ENCODE measurements at regions of chr6 and their contacts with region 1.

Region 1: GRCh38 chr6:137094411-137095008 is 49.7 kb upstream of the IL20RA start:
- DNase-seq: peak in 37 of 42 donors; percentile 25 to 82 (median 62)

Region 2: DNA sequence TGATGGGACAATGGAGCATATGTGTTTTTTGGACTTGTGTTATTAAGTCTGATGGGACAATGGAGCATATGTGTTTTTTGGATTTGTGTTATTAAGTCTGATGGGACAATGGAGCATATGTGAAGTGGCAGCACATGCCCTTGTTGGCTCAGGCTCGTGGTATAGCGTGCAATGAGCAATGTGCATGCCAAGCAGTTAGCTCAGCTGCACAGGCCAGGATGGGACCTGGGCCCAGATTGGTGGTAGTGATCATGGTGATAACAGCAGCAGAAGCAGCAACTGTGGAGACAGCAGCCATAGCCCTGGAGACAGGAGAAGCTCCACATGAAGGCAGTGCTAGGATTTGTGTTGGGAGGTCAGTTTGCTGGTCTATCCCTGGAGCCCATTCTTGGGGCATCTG is 110.8 kb before region 1 on chr6:
- intact Hi-C with region 1: no loop called
- DNase-seq: no peak

Region 3: GRCh38 chr6:137001299-137001976 is 93.1 kb before region 1 on chr6:
- intact Hi-C with region 1: no loop called
- DNase-seq: no peak

Region 4: DNA sequence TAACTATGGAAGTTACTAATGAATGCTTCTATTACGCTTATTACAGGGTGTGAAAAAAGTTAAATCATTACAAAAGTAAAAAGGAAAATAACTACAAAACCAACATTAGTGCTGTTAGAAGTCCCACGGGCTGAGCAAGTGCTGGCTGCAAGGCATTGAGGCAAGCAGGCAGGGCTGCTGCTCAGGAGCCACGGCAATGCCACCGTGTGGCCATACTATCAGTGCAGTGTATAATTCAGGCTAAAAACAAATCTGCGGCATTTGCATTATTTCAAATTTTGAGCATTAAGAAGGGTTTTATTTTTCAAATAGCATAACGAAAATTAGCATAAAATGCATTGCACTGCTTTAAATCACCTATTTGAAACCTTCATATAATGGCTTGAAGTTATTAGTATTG is 107.6 kb after region 1 on chr6:
- intact Hi-C with region 1: loop called (anchors 10 kb)
- DNase-seq: peak in 41 of 42 donors; percentile 22 to 82 (median 60)

Region 5: GRCh38 chr6:137415127-137415833 is 320.8 kb after region 1 on chr6:
- intact Hi-C with region 1: no loop called
- DNase-seq: peak; percentile 25 to 90 (median 69)

Region 6: DNA sequence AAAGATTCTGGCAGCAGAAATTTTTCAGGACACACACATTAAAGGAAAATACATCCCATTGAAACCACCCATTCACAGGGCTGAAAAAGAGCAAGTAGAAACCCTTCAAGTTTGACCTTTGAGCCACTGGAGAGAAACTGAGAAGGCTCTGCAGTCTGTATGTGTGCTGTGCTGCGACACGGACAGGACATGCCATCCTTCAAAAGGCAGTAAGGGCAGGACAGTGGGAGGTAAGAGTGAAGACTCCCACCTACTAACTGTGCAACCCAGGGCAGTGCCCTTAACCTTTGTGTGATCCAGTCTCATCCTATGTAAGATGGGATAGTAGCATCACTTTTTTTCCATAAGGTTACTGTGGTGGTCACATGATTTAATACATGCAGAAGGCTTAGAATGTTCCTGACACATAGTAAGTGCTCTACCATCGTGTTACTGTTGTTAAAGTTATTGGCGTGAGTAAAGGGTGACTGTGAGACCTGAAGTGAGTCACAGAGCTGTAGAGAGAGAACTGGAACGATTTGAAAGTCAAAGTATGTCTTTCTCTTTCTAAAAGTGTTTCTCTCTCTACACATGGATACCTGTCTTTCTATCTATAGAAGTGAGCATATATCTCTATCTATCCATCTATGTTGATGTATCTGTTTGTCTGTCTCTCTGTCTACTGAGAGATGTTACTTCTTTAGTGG is 553.4 kb after region 1 on chr6:
- intact Hi-C with region 1: loop called (anchors 5 kb)
- DNase-seq: no peak